Heart left ventricle (tissue), 16 donors: ENCODE measurements at regions of chr11 and their contacts with region 1.

Region 1: DNA sequence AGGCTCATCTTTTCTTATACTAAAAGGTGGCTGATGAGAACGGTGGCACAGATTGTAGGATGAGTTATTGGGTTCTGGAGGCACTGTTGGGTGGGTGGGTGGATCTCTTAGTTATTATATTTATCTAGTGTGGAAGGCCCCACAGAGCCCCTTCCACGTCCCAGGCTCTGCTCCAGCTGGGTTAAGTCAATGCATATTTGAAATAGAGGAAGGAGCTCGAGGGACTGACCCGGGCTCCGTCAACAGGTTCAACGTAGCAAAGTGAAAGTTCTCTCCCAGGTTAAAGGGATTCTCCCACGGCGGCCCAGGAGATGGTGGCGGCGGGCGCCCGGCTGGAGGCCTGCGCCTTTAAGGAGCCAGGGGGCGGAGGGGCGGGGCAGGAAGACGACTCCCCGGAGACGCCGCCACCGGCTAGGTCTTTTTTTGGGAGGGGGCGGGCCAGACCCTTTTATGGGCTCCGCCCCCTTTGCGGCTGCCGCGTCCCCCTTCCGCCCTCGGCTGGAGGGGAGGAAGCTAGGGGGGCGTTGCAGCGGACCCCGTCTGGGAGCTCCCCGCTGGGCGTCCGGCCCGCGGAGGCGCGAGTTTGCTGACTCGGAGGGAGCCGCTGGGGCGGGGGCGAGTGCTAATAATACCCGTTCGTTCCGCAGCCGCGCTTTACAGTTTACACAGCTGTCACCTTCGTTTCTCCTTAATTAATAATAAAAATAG is 1.5 kb upstream of the INPPL1 start:
- DNase-seq: peak; percentile 96 to 98 (median 97)
- ATAC-seq: peak; percentile 89 to 96 (median 92)
- H3K4me3 ChIP-seq: peak overlapping the region; percentile 58 to 99 (median 88)
- H3K27ac ChIP-seq: peak overlapping the region; percentile 90 to 100 (median 99)
- H3K4me1 ChIP-seq: peaks cover 0 to 52% (median 17%) of the 10 kb centered on the region in 12 donors
- H3K27me3 ChIP-seq: peaks cover 0 to 4% (median 0%) of the 10 kb centered on the region in 9 donors
- CTCF ChIP-seq: peak; percentile 17 to 68 (median 46)
- POLR2A ChIP-seq: peak; percentile 86 to 91

Region 2: GRCh38 chr11:72015511-72016171 is 207.4 kb before region 1 on chr11:
- intact Hi-C with region 1: loop called in 1 of 10 experiments (anchors 10 kb)
- DNase-seq: no peak
- ATAC-seq: no peak
- H3K4me3 ChIP-seq: no peak overlapping the region
- H3K27ac ChIP-seq: peak overlapping the region in 1 of 12 donors; percentile 64
- H3K4me1 ChIP-seq: peaks cover 6 to 45% (median 37%) of the 10 kb centered on the region in 12 donors
- H3K27me3 ChIP-seq: no peaks in the 10 kb centered on the region
- CTCF ChIP-seq: peak in 2 of 12 donors; percentile 21 to 34
- POLR2A ChIP-seq: no peak

Region 3: DNA sequence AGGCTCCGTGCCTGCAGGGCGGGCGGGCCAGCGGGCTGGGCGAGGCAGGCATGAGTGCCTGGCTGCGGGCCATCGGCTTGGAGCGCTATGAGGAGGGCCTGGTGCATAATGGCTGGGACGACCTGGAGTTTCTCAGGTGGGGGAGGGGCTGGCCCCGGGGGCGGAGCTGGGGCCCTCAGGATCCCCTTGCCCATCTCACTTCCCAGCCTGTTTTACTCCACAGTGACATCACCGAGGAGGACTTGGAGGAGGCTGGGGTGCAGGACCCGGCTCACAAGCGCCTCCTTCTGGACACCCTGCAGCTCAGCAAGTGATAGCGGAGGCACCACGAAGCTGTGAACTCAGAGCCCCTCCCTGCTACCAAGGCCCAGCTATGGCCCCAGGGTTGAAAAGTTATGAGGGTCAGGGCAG is 15.0 kb after region 1 on chr11:
- intact Hi-C with region 1: no loop called
- DNase-seq: peak in 2 of 5 donors; percentile 52 to 58
- ATAC-seq: peak; percentile 30 to 53 (median 48)
- H3K4me3 ChIP-seq: no peak overlapping the region
- H3K27ac ChIP-seq: peak overlapping the region in 1 of 12 donors; percentile 78
- H3K4me1 ChIP-seq: peaks cover 0 to 41% (median 31%) of the 10 kb centered on the region in 12 donors
- H3K27me3 ChIP-seq: peaks cover 5 to 39% (median 24%) of the 10 kb centered on the region in 9 donors
- CTCF ChIP-seq: peak; percentile 43 to 75 (median 62)
- POLR2A ChIP-seq: no peak